ENCODE measurements at regions of chr1 and their contacts with region 1.

Region 1: DNA sequence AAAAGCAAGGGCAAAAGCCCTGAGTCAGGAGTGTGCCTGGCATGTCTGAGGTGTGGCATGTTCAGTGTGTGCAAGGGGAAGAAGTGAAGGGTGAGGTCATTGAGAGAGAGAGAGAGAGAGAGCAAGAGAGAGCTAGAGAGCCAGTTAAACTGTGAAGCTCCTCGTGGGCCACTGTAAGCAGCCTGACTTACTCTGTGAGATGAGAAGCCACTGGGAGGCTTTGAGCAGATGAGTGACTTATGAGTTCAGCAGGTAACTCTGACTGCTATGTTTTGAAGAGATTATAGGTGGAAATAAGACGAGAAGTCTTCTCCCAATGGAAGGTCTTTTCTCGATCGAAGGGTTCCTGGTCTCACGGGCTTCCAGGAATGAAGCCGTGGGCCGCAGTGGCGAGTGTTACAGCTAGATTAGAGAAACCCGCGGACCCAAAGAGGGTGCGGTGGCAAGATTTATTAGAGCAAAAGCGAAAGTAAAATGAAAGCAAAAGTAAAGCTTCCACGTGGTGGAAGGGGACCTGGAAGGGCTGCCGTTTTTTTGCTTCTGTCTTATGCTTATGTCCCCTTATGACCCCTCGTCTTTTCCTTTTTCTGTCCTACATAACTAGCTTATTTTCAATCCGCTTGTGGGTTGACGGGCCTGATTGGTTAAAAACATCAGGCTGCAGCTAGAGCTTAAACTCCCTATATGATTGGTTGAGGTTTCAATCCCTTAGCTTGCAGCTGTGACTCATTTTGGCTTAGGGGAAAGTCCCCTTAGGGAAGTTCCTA is 323.1 kb upstream of the FAM78B start:
- DNase-seq: peak; percentile 7 to 87 (median 44)
- ATAC-seq: peak; percentile 86
- H3K4me3 ChIP-seq: peak overlapping the region; percentile 67 to 95
- H3K4me3 Mint-ChIP-seq: no peak overlapping the region
- H3K27ac ChIP-seq: peak overlapping the region; percentile 89 to 95
- H3K27ac Mint-ChIP-seq: no peak overlapping the region
- H3K4me1 ChIP-seq: peaks cover 23% of the 10 kb centered on the region
- H3K4me1 Mint-ChIP-seq: peaks cover 16% of the 10 kb centered on the region
- H3K27me3 ChIP-seq: no peaks in the 10 kb centered on the region
- H3K27me3 Mint-ChIP-seq: no peaks in the 10 kb centered on the region
- CTCF ChIP-seq: no peak

Region 2: DNA sequence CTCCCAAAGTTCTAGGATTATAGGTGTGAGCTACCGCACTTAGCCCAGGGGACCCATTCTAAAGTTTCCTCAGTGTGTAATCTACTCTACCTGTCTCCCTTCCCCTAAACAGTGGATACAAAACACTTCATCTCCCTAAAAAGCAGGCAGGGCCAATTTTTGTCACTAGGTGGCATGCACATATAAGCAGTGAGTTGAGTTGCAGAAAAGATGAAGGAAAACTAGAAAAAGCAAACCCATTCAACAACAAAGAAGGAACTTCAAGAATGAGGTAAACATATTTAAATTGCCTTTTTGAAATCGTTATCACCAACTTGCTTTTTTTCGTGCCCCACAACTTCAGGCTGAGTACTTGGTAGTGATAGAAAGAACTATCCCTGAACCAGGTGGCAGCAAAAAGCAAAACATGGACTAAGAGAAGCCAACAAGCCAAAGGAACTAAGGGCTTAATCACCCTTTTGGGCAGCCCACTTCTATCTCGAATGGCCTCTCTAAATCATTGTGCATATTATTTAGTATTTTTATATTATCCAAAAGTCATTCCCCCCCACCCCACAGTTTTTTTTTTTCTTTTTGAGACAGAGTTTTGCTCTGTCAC is 771.8 kb before region 1 on chr1:
- CTCF ChIA-PET with region 1: no interaction called
- POLR2A ChIA-PET with region 1: no interaction called
- intact Hi-C with region 1: loop called in 1 of 2 experiments (anchors 10 kb)
- DNase-seq: peak in 4 of 9 experiments; percentile 14 to 57 (median 35)
- ATAC-seq: no peak
- H3K4me3 ChIP-seq: no peak overlapping the region
- H3K4me3 Mint-ChIP-seq: no peak overlapping the region
- H3K27ac ChIP-seq: no peak overlapping the region
- H3K27ac Mint-ChIP-seq: no peak overlapping the region
- H3K4me1 ChIP-seq: no peaks in the 10 kb centered on the region
- H3K4me1 Mint-ChIP-seq: no peaks in the 10 kb centered on the region
- H3K27me3 ChIP-seq: no peaks in the 10 kb centered on the region
- H3K27me3 Mint-ChIP-seq: no peaks in the 10 kb centered on the region
- CTCF ChIP-seq: peak; percentile 24

Region 3: GRCh38 chr1:166479052-166479631 is 10.7 kb before region 1 on chr1:
- CTCF ChIA-PET with region 1: interaction called, 26 read pairs
- POLR2A ChIA-PET with region 1: interaction called, 3 read pairs
- intact Hi-C with region 1: no loop called
- DNase-seq: peak in 8 of 9 experiments; percentile 4 to 62 (median 38)
- ATAC-seq: peak; percentile 34
- H3K4me3 ChIP-seq: no peak overlapping the region
- H3K4me3 Mint-ChIP-seq: no peak overlapping the region
- H3K27ac ChIP-seq: no peak overlapping the region
- H3K27ac Mint-ChIP-seq: no peak overlapping the region
- H3K4me1 ChIP-seq: no peaks in the 10 kb centered on the region
- H3K4me1 Mint-ChIP-seq: no peaks in the 10 kb centered on the region
- H3K27me3 ChIP-seq: no peaks in the 10 kb centered on the region
- H3K27me3 Mint-ChIP-seq: no peaks in the 10 kb centered on the region
- CTCF ChIP-seq: peak; percentile 86

Region 4: GRCh38 chr1:166838766-166839599 is 349.1 kb after region 1 on chr1 and contains the start of gene POGK:
- CTCF ChIA-PET with region 1: no interaction called
- POLR2A ChIA-PET with region 1: interaction called, 3 read pairs
- intact Hi-C with region 1: loop called in 1 of 2 experiments (anchors 5 kb)
- DNase-seq: peak; percentile 56 to 92 (median 80)
- ATAC-seq: peak; percentile 88
- H3K4me3 ChIP-seq: peak within 1 kb of the TSS; percentile 68 to 72
- H3K4me3 Mint-ChIP-seq: peak within 1 kb of the TSS; percentile 92
- H3K27ac ChIP-seq: peak within 1 kb of the TSS; percentile 71 to 75
- H3K27ac Mint-ChIP-seq: peak within 1 kb of the TSS; percentile 98
- H3K4me1 ChIP-seq: peaks cover 28% of the 10 kb centered on the region
- H3K4me1 Mint-ChIP-seq: peaks cover 41% of the 10 kb centered on the region
- H3K27me3 ChIP-seq: no peaks in the 10 kb centered on the region
- H3K27me3 Mint-ChIP-seq: no peaks in the 10 kb centered on the region
- CTCF ChIP-seq: no peak
- total RNA-seq, gene POGK: 14.9 to 16.1 TPM